Activated CD4-positive, alpha-beta T cell treated with anti-CD3 and anti-CD28 coated beads, Interleukin-2, amount 10 ng/mL, durations not matched to agents 7 days and 5 days (primary cell): ENCODE measurements at regions of chr14 and their contacts with region 1.

Region 1: DNA sequence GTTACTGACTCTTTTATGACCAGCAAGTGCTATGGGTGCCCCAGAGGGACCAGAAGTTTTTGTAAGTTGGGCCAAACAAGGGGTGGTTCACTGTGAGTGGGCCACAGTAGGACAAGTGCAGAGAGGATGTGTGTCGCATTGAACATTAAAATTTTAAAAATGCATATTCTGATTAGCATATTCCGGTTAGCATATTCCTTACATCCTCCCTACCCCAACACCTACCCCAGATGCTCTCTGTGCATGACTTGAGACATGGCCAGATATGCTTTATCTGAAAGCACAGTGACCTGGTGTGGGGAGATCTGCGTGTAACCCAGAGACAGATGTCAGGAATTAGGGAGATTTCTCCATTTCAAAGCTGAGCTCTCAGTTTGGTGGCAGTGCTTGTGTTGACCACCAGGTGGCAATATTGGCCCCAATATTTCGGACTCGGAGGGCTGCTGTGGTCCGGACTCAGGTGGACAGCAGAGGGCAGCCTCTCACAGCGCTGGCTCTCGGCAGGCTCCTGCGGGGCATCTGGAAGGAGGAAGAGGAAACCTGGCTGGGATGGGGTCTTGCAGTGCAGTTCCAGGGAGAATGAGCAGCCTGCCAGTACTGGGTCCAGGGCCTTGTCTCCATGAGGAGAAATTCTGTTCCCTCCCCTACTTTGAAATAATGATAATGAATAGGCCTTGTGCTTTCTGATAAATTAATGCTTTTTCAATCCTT is 1.6 kb upstream of the CEBPE start:
- DNase-seq: peak; percentile 86
- H3K4me3 Mint-ChIP-seq: peak overlapping the region; percentile 57
- H3K27ac Mint-ChIP-seq: peak overlapping the region; percentile 91
- H3K4me1 Mint-ChIP-seq: peaks cover 38% of the 10 kb centered on the region
- H3K27me3 Mint-ChIP-seq: no peaks in the 10 kb centered on the region

Region 2: DNA sequence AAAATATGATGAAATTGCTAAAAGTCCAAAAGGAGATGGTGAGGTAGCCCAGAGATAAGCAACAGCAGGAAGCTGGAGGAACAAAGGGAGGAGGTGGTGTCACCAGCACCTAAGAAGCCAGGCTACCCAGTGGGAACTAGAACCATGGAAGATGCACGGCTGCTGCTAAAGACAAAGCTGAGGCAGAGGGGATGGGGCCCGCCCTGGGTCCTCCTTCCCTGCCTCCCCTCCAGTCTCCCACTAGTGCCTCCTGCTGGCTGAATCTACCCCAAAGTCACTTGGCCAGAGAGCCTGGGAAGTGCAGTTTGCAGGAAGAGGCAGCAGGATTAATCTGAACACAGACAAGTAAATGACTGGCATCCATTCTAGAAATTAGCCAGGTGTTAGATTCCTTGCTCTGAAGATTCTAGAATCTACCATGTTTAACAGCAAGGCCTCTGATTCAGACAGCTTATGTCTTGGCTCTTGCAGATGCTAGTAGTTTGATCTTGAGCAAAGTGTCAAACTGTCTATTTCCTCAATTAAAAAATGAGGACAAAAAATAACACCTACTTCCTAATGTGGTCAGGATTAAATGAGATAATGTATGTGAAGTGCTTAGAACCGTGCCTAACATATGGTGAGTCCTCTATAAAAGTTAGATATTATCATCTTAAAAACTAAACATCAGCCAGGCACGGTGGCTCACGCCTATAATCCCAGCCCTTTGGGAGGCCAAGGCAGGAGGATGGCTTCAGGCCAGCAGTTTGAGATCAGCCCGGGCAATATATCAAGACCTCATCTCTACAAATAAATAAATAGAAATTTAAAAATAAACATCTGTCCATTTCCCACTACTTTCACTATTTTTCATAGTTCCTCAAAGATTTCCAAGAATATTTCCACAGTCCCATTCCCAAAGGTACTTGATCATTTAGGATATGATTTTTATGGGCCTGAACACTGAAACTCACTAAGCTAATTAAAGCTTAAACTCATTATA is 255.0 kb before region 1 on chr14:
- CTCF ChIA-PET with region 1: no interaction called
- POLR2A ChIA-PET with region 1: no interaction called
- DNase-seq: no peak
- H3K4me3 Mint-ChIP-seq: no peak overlapping the region
- H3K27ac Mint-ChIP-seq: no peak overlapping the region
- H3K4me1 Mint-ChIP-seq: peaks cover 9% of the 10 kb centered on the region
- H3K27me3 Mint-ChIP-seq: peaks cover 22% of the 10 kb centered on the region

Region 3: DNA sequence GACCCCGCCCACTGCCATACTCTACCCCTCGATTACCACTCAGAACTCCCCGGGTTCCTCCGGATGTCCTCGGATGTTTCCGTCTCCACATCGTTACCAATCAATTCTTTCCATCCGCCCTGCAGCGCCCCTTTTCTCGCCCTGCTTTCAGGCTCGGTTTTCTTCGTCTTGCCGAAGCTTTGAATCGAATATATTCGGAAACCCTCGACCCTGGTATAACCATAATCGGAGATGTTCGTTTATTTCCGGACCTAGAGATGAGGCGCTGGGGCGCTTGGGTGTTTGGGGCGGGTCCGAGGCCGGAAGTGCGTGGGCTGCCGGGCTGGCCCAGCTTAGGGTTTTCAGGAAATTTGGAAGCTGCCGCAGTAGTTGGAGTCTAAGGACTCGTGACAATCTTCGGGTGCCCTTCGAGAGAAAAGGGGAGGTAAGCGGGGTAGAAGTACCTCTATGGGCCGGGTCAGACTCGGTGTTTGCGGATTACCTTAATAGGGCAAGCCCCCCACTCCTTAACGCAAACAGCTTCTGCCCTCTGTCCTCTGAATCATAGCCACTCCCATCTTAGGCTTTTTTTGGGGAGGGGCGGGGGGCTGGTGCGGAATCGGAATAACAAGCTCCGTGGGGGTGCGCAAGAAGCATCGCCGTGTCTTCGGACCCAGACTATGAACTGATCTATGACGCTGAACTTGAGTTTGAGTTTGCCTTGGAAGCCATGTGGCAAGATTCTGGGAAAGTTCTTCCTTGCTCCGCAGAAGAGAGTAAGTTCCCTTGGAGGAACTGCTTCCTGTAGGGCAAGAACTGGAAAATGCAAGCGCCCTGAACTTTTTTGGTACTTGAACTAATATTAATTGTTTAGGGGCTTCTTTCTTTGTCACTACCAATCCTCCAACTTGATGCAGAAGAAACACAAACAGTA is 25.2 kb before region 1 on chr14 and contains the start of gene C14orf119:
- CTCF ChIA-PET with region 1: interaction called, 15 read pairs
- POLR2A ChIA-PET with region 1: interaction called, 12 read pairs
- DNase-seq: peak; percentile 100
- H3K4me3 Mint-ChIP-seq: no peak within 1 kb of the TSS
- H3K27ac Mint-ChIP-seq: no peak within 1 kb of the TSS
- H3K4me1 Mint-ChIP-seq: peaks cover 34% of the 10 kb centered on the region
- H3K27me3 Mint-ChIP-seq: no peaks in the 10 kb centered on the region
- total RNA-seq, gene C14orf119: 48.0 to 48.2 TPM

Region 4: GRCh38 chr14:23101213-23101970 is 19.3 kb before region 1 on chr14:
- CTCF ChIA-PET with region 1: interaction called, 15 read pairs
- POLR2A ChIA-PET with region 1: no interaction called
- DNase-seq: no peak
- H3K4me3 Mint-ChIP-seq: no peak overlapping the region
- H3K27ac Mint-ChIP-seq: no peak overlapping the region
- H3K4me1 Mint-ChIP-seq: peaks cover 17% of the 10 kb centered on the region
- H3K27me3 Mint-ChIP-seq: no peaks in the 10 kb centered on the region

Region 5: GRCh38 chr14:23137192-23137829 is 16.6 kb after region 1 on chr14:
- CTCF ChIA-PET with region 1: interaction called, 11 read pairs
- POLR2A ChIA-PET with region 1: no interaction called
- DNase-seq: no peak
- H3K4me3 Mint-ChIP-seq: no peak overlapping the region
- H3K27ac Mint-ChIP-seq: peak overlapping the region; percentile 69
- H3K4me1 Mint-ChIP-seq: no peaks in the 10 kb centered on the region
- H3K27me3 Mint-ChIP-seq: peaks cover 2% of the 10 kb centered on the region

Region 6: DNA sequence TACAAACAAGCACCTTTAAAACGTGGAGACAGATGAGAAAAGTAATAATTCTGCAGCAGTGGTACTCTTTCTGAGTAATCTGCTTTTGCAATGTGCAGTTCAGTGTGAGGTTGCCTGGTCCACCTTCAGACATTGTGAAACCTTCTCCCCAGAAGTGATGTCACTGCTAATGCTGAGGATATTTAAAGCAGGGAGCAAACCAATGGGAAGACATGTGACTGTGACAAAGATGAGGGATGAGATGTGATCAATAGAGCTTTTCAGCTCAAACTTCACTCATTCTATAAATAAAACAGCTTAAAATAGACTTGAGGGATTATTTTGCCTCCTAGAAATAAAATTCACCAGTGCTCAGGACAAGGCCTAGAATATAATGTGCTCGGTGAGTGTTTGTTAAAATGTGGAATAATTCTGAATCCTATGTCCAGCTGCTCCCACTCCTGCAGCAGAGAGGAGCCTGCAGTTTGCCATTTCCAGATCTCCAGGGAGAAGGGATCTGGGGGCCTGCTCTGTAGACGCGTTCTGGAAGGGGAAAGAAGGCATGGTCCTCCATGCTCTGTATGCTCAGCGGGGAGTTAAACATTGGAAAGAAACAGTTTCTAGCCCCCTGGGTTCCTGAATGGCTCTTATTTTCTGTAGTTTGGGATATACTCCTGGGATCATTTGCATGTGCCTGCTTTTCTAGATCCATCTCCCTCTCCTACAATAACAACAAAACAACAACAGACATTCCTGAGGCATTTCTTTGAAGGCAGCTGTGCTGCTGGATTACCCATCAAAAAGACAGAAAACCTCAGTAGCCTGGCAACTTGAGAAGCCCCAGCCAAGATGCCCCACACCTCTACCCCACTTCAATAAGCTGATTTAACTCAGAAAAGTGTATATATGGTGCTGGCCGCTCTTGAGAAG is 53.8 kb after region 1 on chr14:
- CTCF ChIA-PET with region 1: interaction called, 12 read pairs
- POLR2A ChIA-PET with region 1: no interaction called
- DNase-seq: no peak
- H3K4me3 Mint-ChIP-seq: no peak overlapping the region
- H3K27ac Mint-ChIP-seq: no peak overlapping the region
- H3K4me1 Mint-ChIP-seq: peaks cover 9% of the 10 kb centered on the region
- H3K27me3 Mint-ChIP-seq: peaks cover 17% of the 10 kb centered on the region

Region 7: GRCh38 chr14:23186913-23187654 is 66.4 kb after region 1 on chr14:
- CTCF ChIA-PET with region 1: interaction called, 37 read pairs
- POLR2A ChIA-PET with region 1: interaction called, 3 read pairs
- DNase-seq: peak; percentile 39
- H3K4me3 Mint-ChIP-seq: no peak overlapping the region
- H3K27ac Mint-ChIP-seq: no peak overlapping the region
- H3K4me1 Mint-ChIP-seq: no peaks in the 10 kb centered on the region
- H3K27me3 Mint-ChIP-seq: peaks cover 16% of the 10 kb centered on the region

Region 8: DNA sequence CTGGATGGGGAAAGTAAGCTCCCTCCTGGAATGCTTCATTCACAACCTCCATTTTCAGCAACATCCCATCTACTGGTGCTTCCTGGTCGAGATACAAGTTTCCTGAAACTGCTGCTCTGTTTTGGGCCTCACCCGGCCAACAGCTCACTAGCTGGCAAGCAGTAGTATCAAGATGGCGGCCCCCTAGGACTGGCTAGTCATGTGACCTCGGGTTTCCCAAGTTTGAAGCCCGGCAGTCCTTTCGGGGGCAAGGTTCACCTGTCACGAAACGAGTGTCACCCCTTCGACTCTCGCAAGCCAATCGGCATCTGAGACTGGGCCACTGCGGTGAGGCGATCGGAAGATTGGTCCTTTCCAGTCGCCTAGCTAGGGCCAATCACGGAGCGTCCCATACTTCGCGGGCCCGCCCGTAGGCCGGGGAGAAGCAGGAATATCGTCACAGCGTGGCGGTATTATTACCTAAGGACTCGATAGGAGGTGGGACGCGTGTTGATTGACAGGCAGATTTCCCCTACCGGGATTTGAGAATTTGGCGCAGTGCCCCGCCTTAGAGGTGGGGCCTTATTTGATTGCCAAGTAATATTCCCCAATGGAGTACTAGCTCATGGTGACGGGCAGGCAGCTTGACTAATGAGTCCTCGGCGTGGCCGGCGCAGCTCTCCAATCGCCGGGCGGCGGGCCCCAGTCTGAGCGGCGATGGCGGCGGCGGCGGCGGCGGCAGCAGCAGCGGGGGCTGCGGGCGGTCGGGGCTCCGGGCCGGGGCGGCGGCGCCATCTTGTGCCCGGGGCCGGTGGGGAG is 200.3 kb after region 1 on chr14 and contains the start of gene PABPN1:
- CTCF ChIA-PET with region 1: interaction called, 15 read pairs
- POLR2A ChIA-PET with region 1: no interaction called
- DNase-seq: peak; percentile 99
- H3K4me3 Mint-ChIP-seq: peak within 1 kb of the TSS; percentile 93
- H3K27ac Mint-ChIP-seq: peak within 1 kb of the TSS; percentile 98
- H3K4me1 Mint-ChIP-seq: peaks cover 34% of the 10 kb centered on the region
- H3K27me3 Mint-ChIP-seq: no peaks in the 10 kb centered on the region
- total RNA-seq, gene PABPN1: 203 to 208 TPM